Heart right ventricle (tissue), 16 donors: ENCODE measurements at regions of chr2 and their contacts with region 1.

Region 1: GRCh38 chr2:187581125-187581896 is 27.1 kb upstream of the TFPI start:
- DNase-seq: peak in 1 of 2 donors; percentile 33
- ATAC-seq: no peak
- H3K4me3 ChIP-seq: peak overlapping the region in 7 of 10 donors; percentile 5 to 46 (median 38)
- H3K27ac ChIP-seq: peak overlapping the region in 1 of 10 donors; percentile 1
- H3K4me1 ChIP-seq: peaks cover 0 to 22% (median 5%) of the 10 kb centered on the region in 9 donors
- H3K27me3 ChIP-seq: no peaks in the 10 kb centered on the region
- CTCF ChIP-seq: peak; percentile 48 to 82 (median 71)

Region 2: DNA sequence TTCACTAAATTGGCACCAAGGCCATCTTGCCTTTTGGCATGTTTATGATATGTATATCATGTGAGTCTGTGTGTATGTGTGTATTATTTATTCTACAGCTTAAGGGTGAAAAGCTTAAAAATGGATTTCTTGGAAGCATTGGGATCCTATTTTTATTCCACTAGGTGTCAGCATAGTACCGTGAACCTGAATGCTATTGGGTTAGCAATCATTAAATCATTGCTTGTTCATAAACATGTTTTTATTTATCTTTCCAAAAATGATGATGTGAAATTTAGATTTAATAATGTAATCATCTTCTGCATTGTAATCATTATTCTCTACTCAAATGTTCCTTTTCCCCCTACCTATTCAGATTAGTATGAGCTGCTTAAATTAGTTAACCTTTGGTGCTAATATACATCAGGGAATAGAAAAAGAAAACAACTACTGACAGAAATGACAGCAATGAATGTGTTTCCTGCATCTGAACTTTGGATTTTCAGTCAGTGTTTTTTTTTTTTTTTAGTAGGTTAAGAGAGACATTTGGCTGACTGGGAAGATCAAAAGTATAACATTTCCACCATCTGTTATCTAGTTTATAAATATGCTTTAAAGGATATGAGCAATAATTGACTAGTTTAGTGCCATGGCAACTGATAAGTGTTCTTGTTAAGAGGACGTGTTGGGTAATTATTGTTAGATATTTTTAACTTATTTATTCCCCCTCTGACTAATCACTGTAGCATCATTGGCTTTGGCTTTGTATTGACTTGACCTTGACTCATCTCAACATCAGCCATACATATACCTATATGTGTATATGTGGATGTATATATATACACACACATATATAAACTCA is 718.2 kb before region 1 on chr2:
- intact Hi-C with region 1: loop called in 1 of 10 experiments (anchors 10 kb)
- DNase-seq: no peak
- ATAC-seq: peak in 6 of 8 donors; percentile 44 to 75 (median 60)
- H3K4me3 ChIP-seq: no peak overlapping the region
- H3K27ac ChIP-seq: peak overlapping the region in 2 of 10 donors; percentile 22 to 59
- H3K4me1 ChIP-seq: peaks cover 0 to 13% (median 5%) of the 10 kb centered on the region in 9 donors
- H3K27me3 ChIP-seq: no peaks in the 10 kb centered on the region
- CTCF ChIP-seq: peak; percentile 64 to 90 (median 72)

Region 3: DNA sequence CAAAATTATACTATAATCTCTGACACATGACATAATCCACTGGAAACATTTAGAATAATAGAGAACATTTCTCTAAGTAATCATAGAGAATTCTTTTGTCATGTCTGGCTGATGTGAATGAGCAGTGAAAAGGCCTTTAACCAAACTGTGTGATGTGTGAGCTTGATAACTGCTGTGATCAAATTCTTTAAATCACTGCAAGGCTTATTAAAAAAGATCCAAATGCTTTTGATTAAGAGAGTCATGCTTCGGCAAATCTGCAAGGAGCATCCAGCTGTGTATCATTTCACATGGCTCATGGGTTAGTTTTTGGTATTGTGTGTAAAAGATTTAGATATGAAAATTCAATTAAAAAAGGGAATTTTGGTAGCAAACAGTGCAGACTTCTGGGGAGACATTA is 31.5 kb after region 1 on chr2:
- intact Hi-C with region 1: no loop called
- DNase-seq: no peak
- ATAC-seq: no peak
- H3K4me3 ChIP-seq: no peak overlapping the region
- H3K27ac ChIP-seq: no peak overlapping the region
- H3K4me1 ChIP-seq: no peaks in the 10 kb centered on the region
- H3K27me3 ChIP-seq: no peaks in the 10 kb centered on the region
- CTCF ChIP-seq: no peak

Region 4: GRCh38 chr2:187842978-187843847 is 261.9 kb after region 1 on chr2:
- intact Hi-C with region 1: loop called in 5 of 10 experiments (anchors 5 to 10 kb)
- DNase-seq: no peak
- ATAC-seq: no peak
- H3K4me3 ChIP-seq: no peak overlapping the region
- H3K27ac ChIP-seq: no peak overlapping the region
- H3K4me1 ChIP-seq: no peaks in the 10 kb centered on the region
- H3K27me3 ChIP-seq: no peaks in the 10 kb centered on the region
- CTCF ChIP-seq: peak; percentile 22 to 65 (median 50)

Region 5: DNA sequence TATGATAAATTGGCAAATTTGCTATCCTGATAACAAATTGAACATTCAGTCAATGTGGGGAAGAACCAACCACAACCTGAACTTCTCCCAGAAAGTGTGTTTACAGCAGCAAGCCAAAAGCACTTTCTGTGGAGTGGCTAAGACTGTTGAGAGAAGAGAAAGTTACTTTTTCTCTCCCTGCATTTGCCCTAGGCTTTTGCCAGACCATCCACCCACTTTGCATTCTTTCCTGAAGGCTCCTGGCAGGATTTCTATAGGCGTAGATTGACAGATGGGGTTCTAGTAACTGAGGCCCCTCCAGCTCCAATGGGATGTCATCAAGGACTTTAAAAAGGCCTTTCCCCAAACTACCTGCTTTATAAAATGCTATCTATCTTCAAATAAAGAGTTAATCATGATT is 925.5 kb after region 1 on chr2:
- intact Hi-C with region 1: loop called in 6 of 10 experiments (anchors 5 to 10 kb)
- DNase-seq: no peak
- ATAC-seq: no peak
- H3K4me3 ChIP-seq: no peak overlapping the region
- H3K27ac ChIP-seq: no peak overlapping the region
- H3K4me1 ChIP-seq: no peaks in the 10 kb centered on the region
- H3K27me3 ChIP-seq: no peaks in the 10 kb centered on the region
- CTCF ChIP-seq: no peak

Region 6: GRCh38 chr2:189412330-189412953 is 1831.1 kb after region 1 on chr2:
- intact Hi-C with region 1: loop called in 1 of 10 experiments (anchors 5 kb)
- DNase-seq: peak in 1 of 2 donors; percentile 33
- ATAC-seq: peak in 7 of 8 donors; percentile 35 to 71 (median 62)
- H3K4me3 ChIP-seq: no peak overlapping the region
- H3K27ac ChIP-seq: peak overlapping the region in 5 of 10 donors; percentile 13 to 40 (median 31)
- H3K4me1 ChIP-seq: peaks cover 0 to 16% (median 0%) of the 10 kb centered on the region in 9 donors
- H3K27me3 ChIP-seq: no peaks in the 10 kb centered on the region
- CTCF ChIP-seq: peak; percentile 51 to 83 (median 77)